Common myeloid progenitor, CD34-positive (primary cell): ENCODE measurements at regions of chr5 and their contacts with region 1.

Region 1: GRCh38 chr5:141524604-141525597 is 36.0 kb downstream of the PCDHGC5 start:
- DNase-seq: peak; percentile 63 to 78 (median 67)
- H3K4me3 ChIP-seq: no peak overlapping the region
- H3K27ac ChIP-seq: no peak overlapping the region
- H3K4me1 ChIP-seq: peaks cover 7 to 19% (median 8%) of the 10 kb centered on the region in 4 experiments
- H3K27me3 ChIP-seq: no peaks in the 10 kb centered on the region

Region 2: GRCh38 chr5:141412854-141413539 is 111.9 kb before region 1 on chr5 and contains the start of gene PCDHGA10:
- CTCF ChIA-PET with region 1: interaction called, 77 read pairs
- POLR2A ChIA-PET with region 1: no interaction called
- DNase-seq: peak; percentile 64 to 87 (median 87)
- H3K4me3 ChIP-seq: peak within 1 kb of the TSS; percentile 27 to 84 (median 68)
- H3K27ac ChIP-seq: no peak within 1 kb of the TSS
- H3K4me1 ChIP-seq: peaks cover 0 to 15% (median 10%) of the 10 kb centered on the region in 4 experiments
- H3K27me3 ChIP-seq: peaks cover 24 to 85% (median 38%) of the 10 kb centered on the region in 5 experiments

Region 3: GRCh38 chr5:141430332-141431113 is 94.4 kb before region 1 on chr5 and contains the start of gene PCDHGA12:
- CTCF ChIA-PET with region 1: interaction called, 62 read pairs
- POLR2A ChIA-PET with region 1: no interaction called
- DNase-seq: peak; percentile 82 to 88 (median 86)
- H3K4me3 ChIP-seq: peak within 1 kb of the TSS in 6 of 7 experiments; percentile 21 to 56 (median 48)
- H3K27ac ChIP-seq: no peak within 1 kb of the TSS
- H3K4me1 ChIP-seq: peaks cover 2 to 6% (median 5%) of the 10 kb centered on the region in 4 experiments
- H3K27me3 ChIP-seq: peaks cover 8 to 58% (median 25%) of the 10 kb centered on the region in 5 experiments

Region 4: GRCh38 chr5:141512390-141512910 is 12.5 kb before region 1 on chr5:
- CTCF ChIA-PET with region 1: interaction called, 178 read pairs
- POLR2A ChIA-PET with region 1: no interaction called
- DNase-seq: peak; percentile 81 to 83 (median 82)
- H3K4me3 ChIP-seq: peak overlapping the region in 6 of 7 experiments; percentile 51 to 93 (median 70)
- H3K27ac ChIP-seq: no peak overlapping the region
- H3K4me1 ChIP-seq: peaks cover 18 to 47% (median 44%) of the 10 kb centered on the region in 4 experiments
- H3K27me3 ChIP-seq: no peaks in the 10 kb centered on the region

Region 5: DNA sequence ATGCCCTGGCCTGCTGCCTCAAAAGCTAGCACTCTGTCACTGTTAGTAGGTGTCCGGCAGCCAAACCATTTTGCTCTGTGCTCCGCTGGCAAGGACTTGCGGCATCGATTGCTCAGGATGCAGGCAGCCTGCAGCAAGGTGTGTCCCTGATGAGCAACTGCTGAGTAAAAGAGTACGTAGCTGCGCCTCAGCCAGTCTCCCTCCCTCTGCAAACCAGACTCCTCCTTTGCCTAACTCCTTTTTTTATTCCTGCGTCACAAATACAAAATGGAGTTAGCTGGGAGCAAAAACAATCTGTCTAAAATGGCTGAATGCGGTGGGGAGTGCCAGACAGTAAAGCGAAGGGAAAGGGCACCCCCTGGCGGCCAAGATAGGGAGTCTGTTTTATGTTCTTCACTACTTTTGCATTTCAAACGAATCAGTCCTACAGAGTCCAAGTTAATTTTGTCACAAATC is 32.8 kb after region 1 on chr5:
- CTCF ChIA-PET with region 1: interaction called, 32 read pairs
- POLR2A ChIA-PET with region 1: no interaction called
- DNase-seq: peak; percentile 83 to 88 (median 87)
- H3K4me3 ChIP-seq: no peak overlapping the region
- H3K27ac ChIP-seq: no peak overlapping the region
- H3K4me1 ChIP-seq: peaks cover 0 to 13% (median 5%) of the 10 kb centered on the region in 4 experiments
- H3K27me3 ChIP-seq: no peaks in the 10 kb centered on the region

Region 6: DNA sequence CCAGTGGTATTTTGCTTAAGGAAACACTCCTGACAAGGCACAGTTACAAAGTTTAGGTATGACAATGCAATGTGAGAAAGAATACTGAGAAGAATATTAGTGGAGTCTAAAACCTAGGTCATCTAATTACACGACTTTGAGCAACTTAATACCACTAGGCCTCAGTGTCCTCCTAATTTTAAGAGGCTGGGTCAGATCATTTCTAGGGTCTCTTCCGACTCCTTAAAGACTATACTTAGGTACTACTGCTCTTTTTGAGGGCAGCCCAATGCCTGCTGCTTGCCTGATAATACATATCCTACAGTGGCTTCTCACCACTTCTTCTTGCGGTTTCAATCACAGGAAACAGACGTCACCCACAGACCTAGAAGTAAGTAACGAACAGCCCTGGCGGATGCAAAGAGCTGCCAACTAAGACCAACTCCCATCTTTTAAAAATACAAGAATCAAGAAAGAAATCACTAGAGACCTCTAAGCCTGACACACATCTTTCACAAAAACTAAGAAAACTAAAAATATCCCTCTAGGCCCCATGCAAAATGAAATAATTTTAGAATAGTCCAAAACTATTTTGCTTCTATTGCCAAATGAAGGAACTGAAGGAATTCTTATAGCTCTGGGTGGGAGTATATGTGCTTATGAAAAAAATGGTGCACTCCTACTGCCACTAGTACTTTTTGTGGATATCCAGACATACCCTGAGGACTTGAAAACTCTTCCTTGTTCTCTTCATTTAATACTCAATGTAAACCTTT is 80.8 kb after region 1 on chr5:
- CTCF ChIA-PET with region 1: no interaction called
- POLR2A ChIA-PET with region 1: no interaction called
- DNase-seq: peak; percentile 97 to 100 (median 99)
- H3K4me3 ChIP-seq: peak overlapping the region in 4 of 7 experiments; percentile 33 to 56 (median 46)
- H3K27ac ChIP-seq: peak overlapping the region in 1 of 2 experiments; percentile 74
- H3K4me1 ChIP-seq: peaks cover 32 to 63% (median 45%) of the 10 kb centered on the region in 4 experiments
- H3K27me3 ChIP-seq: no peaks in the 10 kb centered on the region

Region 7: DNA sequence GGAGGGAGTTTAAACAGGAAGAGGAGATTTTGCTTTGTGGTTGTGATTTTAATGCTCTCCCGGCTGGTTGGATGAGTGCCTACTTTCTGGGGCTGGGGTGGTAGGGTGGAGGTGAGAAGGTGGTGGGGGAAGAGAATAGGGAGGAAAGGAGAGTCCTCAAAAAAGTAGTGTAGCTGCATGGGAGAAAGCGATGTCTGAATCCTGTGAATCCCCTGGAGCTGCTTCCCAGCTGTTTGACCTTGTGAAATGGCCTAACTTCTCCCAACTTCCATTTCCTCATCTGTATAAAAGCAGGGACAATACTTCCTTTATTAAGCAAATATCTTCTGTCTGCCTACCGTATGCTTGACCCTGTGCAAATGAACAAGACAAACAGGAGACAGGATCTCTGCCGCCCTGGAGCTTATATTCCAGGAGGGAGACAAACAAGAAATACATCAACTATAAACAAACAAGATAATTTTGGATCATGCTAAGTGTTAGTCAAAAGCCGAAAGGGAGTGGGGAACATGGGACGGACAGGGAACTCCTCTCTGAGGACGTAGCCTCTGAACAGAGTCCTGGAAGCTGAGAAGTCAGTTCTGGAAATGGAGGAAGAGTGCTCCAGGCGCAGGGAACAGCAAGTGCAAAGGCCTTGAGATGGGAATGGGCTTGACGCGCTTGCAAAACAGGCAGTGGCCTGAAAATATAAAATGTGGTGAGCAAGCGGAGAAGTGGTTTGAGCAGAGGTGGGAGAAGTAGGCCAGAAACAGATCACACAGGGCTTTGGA is 696.4 kb after region 1 on chr5:
- CTCF ChIA-PET with region 1: no interaction called
- POLR2A ChIA-PET with region 1: no interaction called
- DNase-seq: no peak
- H3K4me3 ChIP-seq: no peak overlapping the region
- H3K27ac ChIP-seq: no peak overlapping the region
- H3K4me1 ChIP-seq: peaks cover 0 to 8% (median 7%) of the 10 kb centered on the region in 4 experiments
- H3K27me3 ChIP-seq: peaks cover 0 to 53% (median 14%) of the 10 kb centered on the region in 5 experiments